ENCODE measurements at regions of chr19 and their contacts with region 1.

Region 1: DNA sequence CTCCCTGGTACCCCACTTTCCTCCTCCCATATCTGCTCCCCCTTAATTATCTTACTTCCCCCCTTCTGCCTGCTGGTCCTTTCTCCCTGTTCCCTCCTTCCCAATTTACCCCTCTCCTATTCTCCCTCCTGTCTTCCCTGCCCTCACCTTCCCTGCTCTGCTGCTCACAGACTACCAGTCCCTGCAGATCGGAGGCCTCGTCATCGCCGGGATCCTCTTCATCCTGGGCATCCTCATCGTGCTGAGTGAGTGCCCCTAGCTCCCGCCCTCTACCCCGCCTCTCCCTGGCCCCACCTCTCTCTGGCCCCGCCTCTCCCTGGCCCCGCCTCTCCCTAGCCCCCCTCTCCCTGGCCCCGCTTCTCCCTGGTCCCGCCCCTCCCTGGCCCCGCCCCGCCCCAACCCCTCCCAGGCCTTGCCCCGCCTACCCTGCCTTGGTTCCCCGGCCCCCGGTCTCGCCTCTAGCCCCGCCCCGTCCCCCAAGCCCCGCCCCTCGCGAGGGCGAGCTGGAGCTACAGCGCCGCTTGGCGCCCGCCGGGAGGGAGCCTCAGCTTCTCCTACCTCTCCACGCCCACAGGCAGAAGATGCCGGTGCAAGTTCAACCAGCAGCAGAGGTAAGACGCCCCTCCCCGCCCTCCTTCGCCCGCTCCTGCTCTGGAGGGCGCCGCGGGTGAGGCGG is 2.0 kb upstream of the FXYD7 start:
- DNase-seq: peak; percentile 96
- ATAC-seq: peak; percentile 91
- H3K4me3 Mint-ChIP-seq: peak overlapping the region; percentile 72
- H3K27ac Mint-ChIP-seq: peak overlapping the region; percentile 54
- H3K4me1 Mint-ChIP-seq: peaks cover 25% of the 10 kb centered on the region
- H3K27me3 Mint-ChIP-seq: peaks cover 30% of the 10 kb centered on the region

Region 2: GRCh38 chr19:35066691-35067563 is 74.2 kb before region 1 on chr19:
- CTCF ChIA-PET with region 1: interaction called, 19 read pairs
- DNase-seq: peak; percentile 90
- ATAC-seq: peak; percentile 92
- H3K4me3 Mint-ChIP-seq: no peak overlapping the region
- H3K27ac Mint-ChIP-seq: peak overlapping the region; percentile 22
- H3K4me1 Mint-ChIP-seq: peaks cover 8% of the 10 kb centered on the region
- H3K27me3 Mint-ChIP-seq: peaks cover 10% of the 10 kb centered on the region

Region 3: GRCh38 chr19:35161434-35161743 is 20.3 kb after region 1 on chr19:
- CTCF ChIA-PET with region 1: interaction called, 14 read pairs
- DNase-seq: no peak
- ATAC-seq: no peak
- H3K4me3 Mint-ChIP-seq: no peak overlapping the region
- H3K27ac Mint-ChIP-seq: no peak overlapping the region
- H3K4me1 Mint-ChIP-seq: peaks cover 22% of the 10 kb centered on the region
- H3K27me3 Mint-ChIP-seq: no peaks in the 10 kb centered on the region

Region 4: DNA sequence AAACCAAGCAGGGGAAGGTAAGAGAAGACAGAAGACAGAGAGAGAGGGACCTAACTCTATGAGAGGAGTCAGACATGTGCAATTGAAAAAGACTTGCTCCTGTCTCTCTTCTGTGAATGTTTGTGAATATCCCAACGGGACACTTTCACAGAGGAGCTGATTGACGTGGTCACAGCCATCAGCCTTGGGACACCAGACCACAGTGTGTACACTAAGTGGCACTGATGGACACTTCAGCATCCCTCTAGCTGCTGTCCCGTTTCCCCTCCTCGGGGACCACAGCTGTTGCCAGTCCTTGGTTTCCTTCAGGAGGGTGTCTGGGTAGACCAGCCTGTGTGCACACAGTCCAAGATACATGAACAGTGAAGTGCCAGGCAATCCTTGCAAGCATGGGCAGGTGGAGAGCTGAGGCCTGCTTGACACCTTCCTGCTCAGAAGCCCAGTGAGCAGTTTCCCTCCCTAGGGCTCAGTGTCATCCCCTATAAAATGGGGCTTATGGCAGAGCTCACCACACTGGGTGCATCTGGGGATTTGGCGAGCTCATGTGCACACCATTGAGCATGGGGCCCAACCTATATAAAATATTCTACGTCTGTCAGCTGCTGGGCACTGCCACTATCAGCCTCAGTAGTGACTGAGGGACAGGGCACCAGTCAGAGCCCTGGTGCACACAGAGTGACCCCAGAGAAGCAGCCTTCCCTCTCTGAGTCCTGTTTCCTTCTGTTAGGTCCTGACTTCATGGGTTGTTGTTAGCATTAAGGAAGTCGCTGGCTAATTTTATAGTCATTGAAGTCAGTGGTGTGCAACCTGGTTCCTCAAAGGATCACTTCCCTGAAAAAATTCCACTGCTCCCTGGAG is 123.4 kb after region 1 on chr19:
- CTCF ChIA-PET with region 1: interaction called, 16 read pairs
- DNase-seq: no peak
- ATAC-seq: no peak
- H3K4me3 Mint-ChIP-seq: no peak overlapping the region
- H3K27ac Mint-ChIP-seq: peak overlapping the region; percentile 17
- H3K4me1 Mint-ChIP-seq: peaks cover 11% of the 10 kb centered on the region
- H3K27me3 Mint-ChIP-seq: no peaks in the 10 kb centered on the region

Measured in activated CD8-positive, alpha-beta memory T cell treated with anti-CD3 and anti-CD28 coated beads, Interleukin-2, amount 10 ng/mL, durations not matched to agents 7 days and 5 days (primary cell).